ENCODE measurements at regions of chr21 and their contacts with region 1.

Region 1: GRCh38 chr21:16194095-16194787 is 464.5 kb downstream of the USP25 start:
- DNase-seq: peak; percentile 42 to 77
- ATAC-seq: peak; percentile 82 to 90 (median 86)
- H3K4me3 ChIP-seq: peak overlapping the region; percentile 66
- H3K27ac ChIP-seq: peak overlapping the region; percentile 85
- H3K4me1 ChIP-seq: peaks cover 8% of the 10 kb centered on the region
- H3K27me3 ChIP-seq: no peaks in the 10 kb centered on the region
- CTCF ChIP-seq: peak; percentile 42

Region 2: GRCh38 chr21:15967661-15968060 is 226.6 kb before region 1 on chr21:
- intact Hi-C with region 1: no loop called
- DNase-seq: no peak
- ATAC-seq: no peak
- H3K4me3 ChIP-seq: no peak overlapping the region
- H3K27ac ChIP-seq: no peak overlapping the region
- H3K4me1 ChIP-seq: no peaks in the 10 kb centered on the region
- H3K27me3 ChIP-seq: no peaks in the 10 kb centered on the region
- CTCF ChIP-seq: no peak

Region 3: DNA sequence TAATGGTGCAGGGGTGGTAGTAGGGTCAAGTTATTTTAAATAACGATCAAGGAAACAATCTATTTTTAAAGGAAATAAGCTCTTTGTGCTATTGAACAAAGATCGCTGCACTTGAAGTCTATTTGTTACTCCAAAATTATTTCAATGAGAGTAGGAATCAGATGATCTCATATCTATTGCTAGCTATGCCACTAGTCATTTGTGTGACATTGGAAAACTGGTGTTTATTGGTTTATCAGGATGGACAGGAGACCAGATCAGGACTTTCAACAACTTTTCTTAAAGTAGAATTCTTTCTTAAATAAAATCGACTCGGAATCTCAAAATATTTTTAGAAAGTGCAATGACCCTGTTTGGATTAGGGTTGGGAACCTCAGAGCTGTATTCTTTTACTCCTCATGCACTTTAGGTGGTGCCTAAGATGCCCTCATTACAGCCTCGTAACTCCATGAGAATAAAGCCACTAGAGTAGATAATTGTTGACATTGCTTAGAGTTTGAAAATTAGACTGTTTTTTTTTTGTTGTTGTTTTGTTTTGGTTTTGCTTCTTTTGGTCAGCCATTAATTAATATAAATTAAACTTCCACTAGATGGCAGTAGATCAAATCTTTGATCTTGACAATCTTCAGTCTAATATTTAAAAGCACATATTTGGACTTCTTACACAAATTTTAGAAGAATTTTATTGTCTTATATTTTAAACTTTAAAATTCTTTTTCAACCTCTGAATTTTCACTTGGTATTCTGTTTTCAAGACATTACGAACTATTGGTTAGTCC is 112.0 kb before region 1 on chr21:
- intact Hi-C with region 1: loop called in 1 of 2 experiments (anchors 5 kb)
- DNase-seq: no peak
- ATAC-seq: no peak
- H3K4me3 ChIP-seq: no peak overlapping the region
- H3K27ac ChIP-seq: no peak overlapping the region
- H3K4me1 ChIP-seq: peaks cover 8% of the 10 kb centered on the region
- H3K27me3 ChIP-seq: no peaks in the 10 kb centered on the region
- CTCF ChIP-seq: peak; percentile 54

Region 4: DNA sequence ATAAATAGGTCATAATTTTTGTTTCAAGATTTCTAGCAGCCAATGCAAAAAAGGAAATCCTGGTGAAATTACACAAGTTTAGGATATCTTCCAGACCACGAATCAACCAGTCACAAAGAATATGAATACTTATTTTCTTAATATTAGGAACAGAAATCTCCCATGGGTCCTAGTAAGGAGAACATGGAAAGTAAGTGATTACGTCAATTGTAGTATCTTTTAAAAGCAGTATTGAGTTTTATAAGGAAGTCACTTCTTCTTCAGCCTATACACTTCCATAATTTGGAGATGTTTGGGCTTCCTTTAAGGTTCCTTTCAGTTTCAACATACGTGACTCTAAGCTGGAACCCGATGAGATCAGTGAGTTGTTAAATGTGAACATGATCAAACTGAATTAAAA is 70.1 kb after region 1 on chr21:
- intact Hi-C with region 1: loop called in 1 of 2 experiments (anchors 5 kb)
- DNase-seq: no peak
- ATAC-seq: peak in 1 of 4 donors; percentile 25
- H3K4me3 ChIP-seq: no peak overlapping the region
- H3K27ac ChIP-seq: no peak overlapping the region
- H3K4me1 ChIP-seq: no peaks in the 10 kb centered on the region
- H3K27me3 ChIP-seq: no peaks in the 10 kb centered on the region
- CTCF ChIP-seq: no peak

Region 5: DNA sequence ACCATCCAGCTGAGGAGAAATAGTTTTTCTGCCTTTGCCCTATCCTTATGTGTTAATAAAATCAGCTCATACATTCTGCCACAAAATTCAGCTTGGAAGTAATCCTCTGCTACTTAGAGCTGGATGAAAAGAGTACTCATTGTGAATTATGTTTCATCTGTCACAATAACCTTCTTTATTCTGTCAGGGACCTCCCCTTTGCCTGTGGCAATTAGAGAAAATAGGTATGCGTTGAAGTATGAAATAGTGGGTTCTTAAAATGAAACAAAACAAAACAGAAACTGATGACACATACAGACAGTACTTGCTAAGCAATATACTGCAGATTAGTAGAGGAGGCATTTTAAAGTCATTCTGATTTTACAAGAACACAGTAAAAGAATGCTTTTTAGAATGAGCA is 114.0 kb after region 1 on chr21:
- intact Hi-C with region 1: loop called (anchors 1 to 5 kb)
- DNase-seq: no peak
- ATAC-seq: peak; percentile 29 to 65 (median 44)
- H3K4me3 ChIP-seq: peak overlapping the region; percentile 57
- H3K27ac ChIP-seq: peak overlapping the region; percentile 48
- H3K4me1 ChIP-seq: peaks cover 10% of the 10 kb centered on the region
- H3K27me3 ChIP-seq: no peaks in the 10 kb centered on the region
- CTCF ChIP-seq: no peak

Region 6: GRCh38 chr21:16323596-16323995 is 129.4 kb after region 1 on chr21:
- intact Hi-C with region 1: loop called in 1 of 2 experiments (anchors 5 kb)
- DNase-seq: no peak
- ATAC-seq: no peak
- H3K4me3 ChIP-seq: no peak overlapping the region
- H3K27ac ChIP-seq: no peak overlapping the region
- H3K4me1 ChIP-seq: peaks cover 3% of the 10 kb centered on the region
- H3K27me3 ChIP-seq: no peaks in the 10 kb centered on the region
- CTCF ChIP-seq: no peak

Region 7: DNA sequence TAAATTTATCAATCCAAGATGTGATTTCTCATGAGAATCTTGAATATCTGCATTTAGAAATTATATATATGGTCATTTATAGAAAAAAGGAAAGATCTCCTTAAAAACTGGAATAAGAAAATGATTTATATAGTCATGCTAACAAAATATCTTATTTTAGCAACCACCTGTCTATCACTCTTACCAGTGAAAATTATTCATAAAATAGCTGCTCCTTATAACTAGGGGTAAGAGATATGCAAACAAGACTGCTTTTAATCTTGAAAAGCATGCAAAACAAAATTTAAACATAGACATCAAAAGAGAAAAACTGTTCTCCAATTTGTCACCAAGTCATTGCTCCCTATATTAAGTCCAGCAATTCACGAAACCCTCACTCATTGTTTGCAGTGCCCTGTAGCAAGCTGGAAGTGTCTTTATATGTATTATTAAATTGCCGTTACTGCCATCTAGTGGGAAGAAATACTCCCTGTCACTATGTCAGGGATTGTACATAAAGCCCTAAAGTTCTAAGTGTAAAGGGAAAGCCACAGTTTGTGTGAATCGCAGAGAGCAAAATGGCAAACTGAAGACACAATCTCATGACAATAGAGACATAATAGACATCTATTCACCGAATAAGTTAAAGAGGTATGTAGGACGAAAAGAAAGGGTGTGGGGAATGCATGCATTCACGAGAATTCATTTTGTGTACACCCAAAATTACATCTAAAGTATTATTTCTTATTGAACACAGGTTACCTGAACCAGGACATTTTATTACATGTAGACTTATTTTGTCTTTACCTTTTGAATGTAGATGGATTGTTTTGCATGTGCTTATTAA is 136.1 kb after region 1 on chr21:
- intact Hi-C with region 1: loop called in 1 of 2 experiments (anchors 2 kb)
- DNase-seq: no peak
- ATAC-seq: peak; percentile 84 to 97 (median 96)
- H3K4me3 ChIP-seq: peak overlapping the region; percentile 23
- H3K27ac ChIP-seq: peak overlapping the region; percentile 0
- H3K4me1 ChIP-seq: peaks cover 8% of the 10 kb centered on the region
- H3K27me3 ChIP-seq: no peaks in the 10 kb centered on the region
- CTCF ChIP-seq: peak; percentile 81

Region 8: DNA sequence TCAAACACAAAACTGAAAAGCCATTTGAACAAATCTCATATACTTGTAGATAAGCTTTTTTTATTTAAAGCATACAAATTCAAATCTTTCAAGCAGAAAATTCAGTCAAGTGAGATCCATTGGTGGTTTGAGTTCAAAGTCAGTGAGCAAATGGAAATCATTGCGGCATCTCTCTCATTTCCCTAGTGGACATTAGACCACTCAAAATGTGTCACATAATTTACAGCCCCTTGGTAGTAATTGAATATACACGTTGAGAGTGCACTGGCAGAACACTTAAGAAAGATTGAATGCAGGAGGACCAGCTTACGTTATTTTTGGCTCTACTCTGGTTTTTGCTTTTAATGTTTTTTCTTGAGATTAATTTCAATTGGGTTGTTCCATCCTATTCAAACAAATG is 169.3 kb after region 1 on chr21:
- intact Hi-C with region 1: no loop called
- DNase-seq: no peak
- ATAC-seq: no peak
- H3K4me3 ChIP-seq: no peak overlapping the region
- H3K27ac ChIP-seq: no peak overlapping the region
- H3K4me1 ChIP-seq: peaks cover 4% of the 10 kb centered on the region
- H3K27me3 ChIP-seq: no peaks in the 10 kb centered on the region
- CTCF ChIP-seq: no peak

Region 9: DNA sequence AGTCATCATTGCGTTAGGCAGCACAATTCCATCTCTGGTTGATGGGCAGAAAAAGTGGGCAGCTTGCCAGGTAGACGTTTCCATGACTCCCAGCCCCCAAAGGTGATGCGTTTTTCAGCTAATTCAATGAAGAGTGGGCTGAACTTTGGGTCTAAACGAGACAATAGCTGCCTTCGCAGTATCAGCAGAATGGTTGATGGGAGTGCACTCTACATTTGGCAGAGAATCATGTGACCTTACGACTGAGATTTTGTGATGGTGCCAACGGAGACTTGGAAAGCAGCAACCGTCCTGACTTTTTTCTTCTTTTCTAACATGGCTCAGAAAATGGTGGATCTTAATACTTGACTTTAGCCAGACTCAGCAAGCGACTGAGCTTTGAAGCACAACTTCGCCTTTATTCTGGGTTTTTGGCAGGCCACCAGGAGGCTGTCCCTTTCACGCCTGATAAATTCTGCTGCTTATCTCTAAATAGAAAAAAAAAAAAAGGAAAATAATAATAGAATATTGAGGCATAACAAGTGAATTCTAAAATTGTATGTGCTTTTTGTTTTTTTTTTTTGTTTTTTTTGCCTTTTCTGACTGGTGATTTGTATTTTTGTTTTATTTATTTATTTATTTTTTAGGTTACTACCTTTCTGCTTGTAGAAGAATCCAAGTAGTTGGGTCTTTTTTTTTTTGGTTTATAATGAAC is 340.3 kb after region 1 on chr21:
- intact Hi-C with region 1: loop called in 1 of 2 experiments (anchors 5 kb)
- DNase-seq: peak; percentile 75 to 85
- ATAC-seq: peak; percentile 67 to 79 (median 75)
- H3K4me3 ChIP-seq: peak overlapping the region; percentile 74
- H3K27ac ChIP-seq: peak overlapping the region; percentile 87
- H3K4me1 ChIP-seq: peaks cover 19% of the 10 kb centered on the region
- H3K27me3 ChIP-seq: no peaks in the 10 kb centered on the region
- CTCF ChIP-seq: no peak